ENCODE measurements at regions of chr4 and their contacts with region 1.

Region 1: DNA sequence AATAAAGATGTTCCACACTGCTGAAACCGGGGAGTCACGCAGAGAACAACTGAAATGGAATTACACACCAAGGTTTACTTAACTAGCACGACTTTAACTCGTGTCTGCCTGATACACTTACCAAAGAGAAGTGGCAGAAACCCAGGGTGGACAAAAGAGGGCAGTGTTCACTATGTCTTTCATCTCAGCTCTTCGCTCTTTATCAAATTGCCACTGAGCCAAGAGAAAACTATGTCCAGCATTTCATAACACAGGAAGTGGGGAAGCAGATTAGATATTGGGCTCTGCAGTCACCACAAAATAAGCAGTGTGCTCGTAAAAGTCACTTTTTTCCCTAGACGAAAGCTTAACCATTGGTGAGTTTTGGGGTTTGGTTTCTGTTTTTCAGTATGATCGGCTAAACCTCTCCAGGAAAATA is 155.7 kb downstream of the CHIC2 start:
- DNase-seq: peak; percentile 60 to 76
- H3K4me3 ChIP-seq: peak overlapping the region; percentile 8; the same call in 1 of the 2 replicates
- H3K4me3 Mint-ChIP-seq: peak overlapping the region; percentile 68
- H3K27ac Mint-ChIP-seq: peak overlapping the region; percentile 57
- H3K4me1 ChIP-seq: peaks cover 44% of the 10 kb centered on the region
- H3K4me1 Mint-ChIP-seq: peaks cover 21% of the 10 kb centered on the region
- H3K27me3 ChIP-seq: no peaks in the 10 kb centered on the region
- H3K27me3 Mint-ChIP-seq: no peaks in the 10 kb centered on the region
- CTCF ChIP-seq: peak; percentile 57 to 72

Region 2: GRCh38 chr4:53015681-53016080 is 893.0 kb before region 1 on chr4:
- CTCF ChIA-PET with region 1: no interaction called
- POLR2A ChIA-PET with region 1: no interaction called
- intact Hi-C with region 1: loop called (anchors 5 kb)
- DNase-seq: peak in 1 of 2 experiments; percentile 44
- H3K4me3 ChIP-seq: no peak overlapping the region
- H3K4me3 Mint-ChIP-seq: no peak overlapping the region
- H3K27ac Mint-ChIP-seq: no peak overlapping the region
- H3K4me1 ChIP-seq: peaks cover 38% of the 10 kb centered on the region
- H3K4me1 Mint-ChIP-seq: peaks cover 13% of the 10 kb centered on the region
- H3K27me3 ChIP-seq: no peaks in the 10 kb centered on the region
- H3K27me3 Mint-ChIP-seq: no peaks in the 10 kb centered on the region
- CTCF ChIP-seq: peak; percentile 70 to 74

Region 3: GRCh38 chr4:53313510-53313909 is 595.2 kb before region 1 on chr4:
- CTCF ChIA-PET with region 1: no interaction called
- POLR2A ChIA-PET with region 1: no interaction called
- intact Hi-C with region 1: loop called (anchors 10 kb)
- DNase-seq: peak; percentile 38 to 48
- H3K4me3 ChIP-seq: no peak overlapping the region
- H3K4me3 Mint-ChIP-seq: no peak overlapping the region
- H3K27ac Mint-ChIP-seq: no peak overlapping the region
- H3K4me1 ChIP-seq: no peaks in the 10 kb centered on the region
- H3K4me1 Mint-ChIP-seq: peaks cover 13% of the 10 kb centered on the region
- H3K27me3 ChIP-seq: no peaks in the 10 kb centered on the region
- H3K27me3 Mint-ChIP-seq: no peaks in the 10 kb centered on the region
- CTCF ChIP-seq: peak in 1 of 2 experiments; percentile 54

Region 4: GRCh38 chr4:53702334-53703266 is 206.1 kb before region 1 on chr4:
- CTCF ChIA-PET with region 1: interaction called, 4 read pairs
- POLR2A ChIA-PET with region 1: no interaction called
- intact Hi-C with region 1: loop called (anchors 5 kb)
- DNase-seq: no peak
- H3K4me3 ChIP-seq: no peak overlapping the region
- H3K4me3 Mint-ChIP-seq: no peak overlapping the region
- H3K27ac Mint-ChIP-seq: no peak overlapping the region
- H3K4me1 ChIP-seq: no peaks in the 10 kb centered on the region
- H3K4me1 Mint-ChIP-seq: peaks cover 9% of the 10 kb centered on the region
- H3K27me3 ChIP-seq: no peaks in the 10 kb centered on the region
- H3K27me3 Mint-ChIP-seq: no peaks in the 10 kb centered on the region
- CTCF ChIP-seq: no peak

Region 5: DNA sequence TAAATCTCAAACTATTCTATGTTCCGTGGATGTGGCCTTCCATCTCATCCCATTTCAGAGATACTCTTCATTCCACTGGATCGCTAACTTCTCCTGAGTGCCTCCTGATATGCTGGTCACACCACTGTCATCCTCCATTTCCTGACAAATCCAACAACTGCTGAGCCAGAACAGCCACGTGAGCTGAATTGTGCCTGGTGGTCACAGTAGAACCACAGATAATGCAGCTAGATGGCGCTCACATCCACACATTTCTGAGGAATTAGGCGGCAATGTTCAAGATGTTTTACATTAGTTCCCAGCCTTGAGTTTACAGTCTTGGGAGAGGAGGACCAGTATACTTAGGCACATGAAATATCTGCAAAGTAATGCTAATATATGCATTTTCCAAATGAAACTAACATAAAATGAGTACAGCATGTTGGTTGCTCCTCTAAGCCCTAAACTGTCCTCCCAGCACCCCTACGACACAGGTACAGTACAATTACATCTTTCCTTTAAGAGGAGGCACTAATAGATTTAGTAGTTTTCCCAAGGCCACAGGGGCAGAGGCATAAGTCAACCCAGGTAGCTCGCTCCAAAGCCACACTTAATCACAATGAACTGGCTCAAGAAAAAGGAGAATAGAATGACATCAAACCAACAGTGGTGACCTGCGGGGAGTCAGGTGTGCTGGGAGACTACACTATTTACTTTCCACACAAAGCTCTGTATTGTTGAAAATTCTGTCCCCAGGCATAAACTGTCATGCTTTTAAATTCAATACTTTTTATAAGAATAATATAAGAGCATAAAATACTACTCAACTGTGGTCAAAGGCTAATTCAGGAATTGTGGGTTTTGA is 21.5 kb after region 1 on chr4:
- CTCF ChIA-PET with region 1: interaction called, 13 read pairs
- POLR2A ChIA-PET with region 1: no interaction called
- intact Hi-C with region 1: loop called (anchors 1 kb)
- DNase-seq: peak; percentile 84 to 89
- H3K4me3 ChIP-seq: no peak overlapping the region
- H3K4me3 Mint-ChIP-seq: no peak overlapping the region
- H3K27ac Mint-ChIP-seq: no peak overlapping the region
- H3K4me1 ChIP-seq: peaks cover 60% of the 10 kb centered on the region
- H3K4me1 Mint-ChIP-seq: peaks cover 21% of the 10 kb centered on the region
- H3K27me3 ChIP-seq: no peaks in the 10 kb centered on the region
- H3K27me3 Mint-ChIP-seq: no peaks in the 10 kb centered on the region
- CTCF ChIP-seq: peak; percentile 65 to 72

Region 6: GRCh38 chr4:54144199-54144598 is 235.5 kb after region 1 on chr4:
- CTCF ChIA-PET with region 1: no interaction called
- POLR2A ChIA-PET with region 1: no interaction called
- intact Hi-C with region 1: loop called (anchors 2 kb)
- DNase-seq: no peak
- H3K4me3 ChIP-seq: no peak overlapping the region
- H3K4me3 Mint-ChIP-seq: no peak overlapping the region
- H3K27ac Mint-ChIP-seq: no peak overlapping the region
- H3K4me1 ChIP-seq: peaks cover 8% of the 10 kb centered on the region
- H3K4me1 Mint-ChIP-seq: peaks cover 16% of the 10 kb centered on the region
- H3K27me3 ChIP-seq: no peaks in the 10 kb centered on the region
- H3K27me3 Mint-ChIP-seq: no peaks in the 10 kb centered on the region
- CTCF ChIP-seq: no peak

Region 7: GRCh38 chr4:54228056-54228527 is 319.4 kb after region 1 on chr4:
- CTCF ChIA-PET with region 1: interaction called, 21 read pairs
- POLR2A ChIA-PET with region 1: no interaction called
- intact Hi-C with region 1: loop called (anchors 1 kb)
- DNase-seq: peak; percentile 85 to 90
- H3K4me3 ChIP-seq: peak overlapping the region; percentile 64
- H3K4me3 Mint-ChIP-seq: peak overlapping the region; percentile 87
- H3K27ac Mint-ChIP-seq: peak overlapping the region; percentile 79
- H3K4me1 ChIP-seq: peaks cover 9% of the 10 kb centered on the region; the same call in 1 of the 2 replicates
- H3K4me1 Mint-ChIP-seq: peaks cover 13% of the 10 kb centered on the region
- H3K27me3 ChIP-seq: no peaks in the 10 kb centered on the region
- H3K27me3 Mint-ChIP-seq: no peaks in the 10 kb centered on the region
- CTCF ChIP-seq: peak; percentile 87 to 89

Measured in Caco-2 (cell line).